ENCODE measurements at regions of chr2 and their contacts with region 1.

Region 1: GRCh38 chr2:85561317-85561979 is at the start of gene GGCX:
- DNase-seq: peak; percentile 92
- ATAC-seq: peak; percentile 98
- H3K4me3 ChIP-seq: peak within 1 kb of the TSS; percentile 65
- H3K27ac ChIP-seq: peak within 1 kb of the TSS; percentile 81
- H3K4me1 ChIP-seq: peaks cover 3% of the 10 kb centered on the region; the same call in 1 of the 2 replicates
- H3K27me3 ChIP-seq: no peaks in the 10 kb centered on the region
- CTCF ChIP-seq: peak; percentile 31; the same call in 1 of the 2 replicates
- POLR2A ChIP-seq: peak; percentile 62
- RAD21 ChIP-seq: 0 out of 2 replicates have a peak, but pooled peaks have one; percentile 16
- total RNA-seq, gene GGCX: 31.9 and 35.0 TPM in 2 replicates

Region 2: GRCh38 chr2:85504778-85505323 is 56.6 kb before region 1 on chr2:
- CTCF ChIA-PET with region 1: no interaction called
- POLR2A ChIA-PET with region 1: no interaction called
- dilution Hi-C with region 1: no loop called
- in situ Hi-C with region 1: no loop called
- intact Hi-C with region 1: no loop called
- DNase-seq: peak; percentile 97
- ATAC-seq: peak; percentile 70
- H3K4me3 ChIP-seq: no peak overlapping the region
- H3K27ac ChIP-seq: peak overlapping the region; percentile 72
- H3K4me1 ChIP-seq: peaks cover 32% of the 10 kb centered on the region
- H3K27me3 ChIP-seq: no peaks in the 10 kb centered on the region
- CTCF ChIP-seq: no peak
- POLR2A ChIP-seq: no peak
- RAD21 ChIP-seq: no peak; the same call in 1 of the 2 replicates

Region 3: GRCh38 chr2:85584857-85585783 is 23.7 kb after region 1 on chr2:
- CTCF ChIA-PET with region 1: no interaction called
- POLR2A ChIA-PET with region 1: interaction called, 3 read pairs
- dilution Hi-C with region 1: no loop called
- in situ Hi-C with region 1: no loop called
- intact Hi-C with region 1: loop called (anchors 2 kb)
- DNase-seq: peak; percentile 63
- ATAC-seq: peak; percentile 69
- H3K4me3 ChIP-seq: peak overlapping the region; percentile 50
- H3K27ac ChIP-seq: peak overlapping the region; percentile 90
- H3K4me1 ChIP-seq: peaks cover 26% of the 10 kb centered on the region
- H3K27me3 ChIP-seq: no peaks in the 10 kb centered on the region
- CTCF ChIP-seq: no peak
- POLR2A ChIP-seq: no peak
- RAD21 ChIP-seq: no peak

Region 4: GRCh38 chr2:85602476-85603234 is 41.2 kb after region 1 on chr2 and contains the start of gene TMEM150A:
- CTCF ChIA-PET with region 1: no interaction called
- POLR2A ChIA-PET with region 1: no interaction called
- dilution Hi-C with region 1: no loop called
- in situ Hi-C with region 1: no loop called
- intact Hi-C with region 1: loop called (anchors 5 kb)
- DNase-seq: peak; percentile 80
- ATAC-seq: peak; percentile 93
- H3K4me3 ChIP-seq: peak within 1 kb of the TSS; percentile 99
- H3K27ac ChIP-seq: peak within 1 kb of the TSS; percentile 80
- H3K4me1 ChIP-seq: peaks cover 25% of the 10 kb centered on the region
- H3K27me3 ChIP-seq: no peaks in the 10 kb centered on the region
- CTCF ChIP-seq: peak; percentile 38
- POLR2A ChIP-seq: peak; percentile 70
- RAD21 ChIP-seq: peak; percentile 12; the same call in 1 of the 2 replicates
- total RNA-seq, gene TMEM150A: 4.7 and 4.8 TPM in 2 replicates

Region 5: GRCh38 chr2:85772019-85772745 is 210.7 kb after region 1 on chr2:
- CTCF ChIA-PET with region 1: no interaction called
- POLR2A ChIA-PET with region 1: no interaction called
- dilution Hi-C with region 1: no loop called
- in situ Hi-C with region 1: no loop called
- intact Hi-C with region 1: no loop called
- DNase-seq: peak; percentile 100
- ATAC-seq: peak; percentile 90
- H3K4me3 ChIP-seq: no peak overlapping the region
- H3K27ac ChIP-seq: peak overlapping the region; percentile 88
- H3K4me1 ChIP-seq: peaks cover 46% of the 10 kb centered on the region
- H3K27me3 ChIP-seq: no peaks in the 10 kb centered on the region
- CTCF ChIP-seq: peak; percentile 41; the same call in 1 of the 2 replicates
- POLR2A ChIP-seq: peak; percentile 46
- RAD21 ChIP-seq: peak; percentile 52

Measured in IMR-90 (cell line).